B cell (primary cell): ENCODE measurements at regions of chr16 and their contacts with region 1.

Region 1: GRCh38 chr16:88452482-88453216 is 431 bp upstream of the ZFPM1 start:
- DNase-seq: peak; percentile 98
- ATAC-seq: peak; percentile 74
- H3K4me3 ChIP-seq: peak overlapping the region in 4 of 5 experiments; percentile 47 to 86 (median 60)
- H3K4me3 Mint-ChIP-seq: peak overlapping the region; percentile 84
- H3K27ac ChIP-seq: peak overlapping the region in 1 of 2 donors; percentile 67
- H3K27ac Mint-ChIP-seq: peak overlapping the region; percentile 88
- H3K4me1 ChIP-seq: peaks cover 51 to 61% of the 10 kb centered on the region in 2 donors
- H3K4me1 Mint-ChIP-seq: peaks cover 62% of the 10 kb centered on the region
- H3K27me3 ChIP-seq: peaks cover 0 to 11% (median 0%) of the 10 kb centered on the region in 4 experiments
- H3K27me3 Mint-ChIP-seq: no peaks in the 10 kb centered on the region
- CTCF ChIP-seq: no peak

Region 2: DNA sequence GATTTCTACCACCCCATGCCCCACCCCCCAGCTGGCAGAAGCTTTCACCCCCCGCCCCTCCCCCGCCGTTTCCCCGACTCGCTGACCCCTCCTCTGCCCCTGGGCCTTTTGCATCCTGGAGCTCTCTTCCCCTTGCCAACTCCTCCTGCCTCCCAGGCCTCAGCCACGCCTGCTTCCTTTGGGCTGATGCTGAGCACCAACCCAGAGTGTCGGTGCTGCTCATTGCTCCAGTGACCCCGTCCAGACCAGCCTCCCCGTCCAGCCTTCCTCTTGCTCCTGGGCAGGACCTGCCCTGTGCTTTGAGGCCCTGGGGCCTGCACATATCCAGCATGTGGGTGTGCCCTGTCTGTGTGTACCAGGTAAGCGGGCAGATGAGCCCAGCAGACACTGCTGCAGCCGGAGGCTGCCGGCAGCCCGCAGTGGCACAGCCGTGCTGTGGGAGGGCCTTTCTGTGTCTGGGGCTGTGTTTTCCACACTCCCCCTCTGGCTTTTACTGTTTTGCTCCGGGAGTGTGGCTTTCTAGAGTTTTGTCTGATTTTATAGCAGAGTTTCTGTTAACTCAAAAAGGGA is 777.4 kb before region 1 on chr16:
- CTCF ChIA-PET with region 1: no interaction called
- POLR2A ChIA-PET with region 1: no interaction called
- intact Hi-C with region 1: no loop called
- DNase-seq: no peak
- ATAC-seq: no peak
- H3K4me3 ChIP-seq: no peak overlapping the region
- H3K4me3 Mint-ChIP-seq: no peak overlapping the region
- H3K27ac ChIP-seq: no peak overlapping the region
- H3K27ac Mint-ChIP-seq: no peak overlapping the region
- H3K4me1 ChIP-seq: peaks cover 0 to 39% of the 10 kb centered on the region in 2 donors
- H3K4me1 Mint-ChIP-seq: peaks cover 2% of the 10 kb centered on the region
- H3K27me3 ChIP-seq: no peaks in the 10 kb centered on the region
- H3K27me3 Mint-ChIP-seq: peaks cover 3% of the 10 kb centered on the region
- CTCF ChIP-seq: no peak

Region 3: GRCh38 chr16:87950765-87951549 is 501.7 kb before region 1 on chr16 and contains the start of gene BANP:
- CTCF ChIA-PET with region 1: no interaction called
- POLR2A ChIA-PET with region 1: interaction called, 3 read pairs
- intact Hi-C with region 1: loop called (anchors 2 kb)
- DNase-seq: peak; percentile 99
- ATAC-seq: peak; percentile 91
- H3K4me3 ChIP-seq: peak within 1 kb of the TSS; percentile 75 to 99 (median 79)
- H3K4me3 Mint-ChIP-seq: peak within 1 kb of the TSS; percentile 97
- H3K27ac ChIP-seq: peak within 1 kb of the TSS; percentile 89 to 90
- H3K27ac Mint-ChIP-seq: peak within 1 kb of the TSS; percentile 99
- H3K4me1 ChIP-seq: peaks cover 46 to 65% of the 10 kb centered on the region in 2 donors
- H3K4me1 Mint-ChIP-seq: peaks cover 65% of the 10 kb centered on the region
- H3K27me3 ChIP-seq: no peaks in the 10 kb centered on the region
- H3K27me3 Mint-ChIP-seq: no peaks in the 10 kb centered on the region
- CTCF ChIP-seq: peak; percentile 70
- total RNA-seq, gene BANP: 181 and 212 TPM in 2 replicates

Region 4: DNA sequence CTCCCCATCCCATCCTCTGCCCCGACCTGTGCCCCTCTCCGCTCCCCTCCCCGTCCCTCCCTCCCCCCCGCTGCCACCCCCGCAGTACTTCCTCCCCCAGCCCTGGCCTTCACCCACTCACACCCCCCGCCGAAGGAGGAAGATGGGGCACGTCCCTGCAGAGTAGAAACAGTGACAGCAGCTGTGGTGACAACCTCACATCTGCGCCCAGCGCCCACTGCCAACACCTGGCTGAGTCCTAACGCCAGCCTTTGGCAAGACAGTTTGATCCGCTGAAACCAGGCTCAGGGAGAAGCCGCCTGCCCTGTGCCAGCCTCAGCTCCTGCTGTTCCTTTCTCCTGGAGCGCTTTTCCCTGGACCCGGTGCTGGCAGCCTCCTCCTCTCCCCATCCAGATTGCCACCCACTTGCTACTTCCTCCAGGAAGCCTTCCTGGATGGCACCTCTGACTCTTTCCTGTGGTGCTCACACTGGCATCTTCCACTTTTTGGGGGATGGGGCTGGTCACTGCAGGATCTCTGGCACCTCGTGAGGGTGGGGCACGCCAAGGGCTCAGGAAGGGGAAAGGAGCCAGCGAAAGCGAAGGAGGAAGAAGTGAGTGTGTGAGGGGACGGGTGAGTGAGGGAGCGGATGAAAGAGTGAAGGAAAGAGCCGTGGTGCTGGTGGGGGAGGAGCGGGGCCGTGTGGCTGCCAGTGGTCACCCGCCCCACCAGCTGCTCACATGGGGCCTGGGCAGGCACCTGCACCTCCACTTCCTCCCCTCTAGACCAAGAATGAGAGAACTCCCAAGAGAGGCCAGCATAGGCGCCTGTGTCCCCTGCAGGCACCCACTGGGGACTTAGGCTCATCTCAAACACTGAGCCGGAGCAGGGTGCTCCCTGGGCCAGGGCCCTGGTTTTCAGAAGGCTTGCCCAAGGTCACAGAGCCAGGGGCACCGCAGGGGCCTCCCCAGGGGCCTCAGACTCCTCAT is 27.4 kb after region 1 on chr16:
- CTCF ChIA-PET with region 1: interaction called, 4 read pairs
- POLR2A ChIA-PET with region 1: interaction called, 7 read pairs
- intact Hi-C with region 1: loop called (anchors 1 kb)
- DNase-seq: peak; percentile 85
- ATAC-seq: peak; percentile 81
- H3K4me3 ChIP-seq: peak overlapping the region in 4 of 5 experiments; percentile 17 to 53 (median 28)
- H3K4me3 Mint-ChIP-seq: peak overlapping the region; percentile 85
- H3K27ac ChIP-seq: peak overlapping the region; percentile 65 to 67
- H3K27ac Mint-ChIP-seq: peak overlapping the region; percentile 95
- H3K4me1 ChIP-seq: peaks cover 32 to 61% of the 10 kb centered on the region in 2 donors
- H3K4me1 Mint-ChIP-seq: peaks cover 49% of the 10 kb centered on the region
- H3K27me3 ChIP-seq: no peaks in the 10 kb centered on the region
- H3K27me3 Mint-ChIP-seq: no peaks in the 10 kb centered on the region
- CTCF ChIP-seq: no peak

Region 5: GRCh38 chr16:88569985-88570690 is 117.5 kb after region 1 on chr16 and contains the start of gene ZC3H18:
- CTCF ChIA-PET with region 1: no interaction called
- POLR2A ChIA-PET with region 1: no interaction called
- intact Hi-C with region 1: loop called (anchors 1 kb)
- DNase-seq: peak; percentile 99
- ATAC-seq: peak; percentile 93
- H3K4me3 ChIP-seq: peak within 1 kb of the TSS; percentile 55 to 76 (median 73)
- H3K4me3 Mint-ChIP-seq: peak within 1 kb of the TSS; percentile 90
- H3K27ac ChIP-seq: peak within 1 kb of the TSS; percentile 52 to 87
- H3K27ac Mint-ChIP-seq: peak within 1 kb of the TSS; percentile 91
- H3K4me1 ChIP-seq: peaks cover 17 to 18% of the 10 kb centered on the region in 2 donors
- H3K4me1 Mint-ChIP-seq: peaks cover 25% of the 10 kb centered on the region
- H3K27me3 ChIP-seq: no peaks in the 10 kb centered on the region
- H3K27me3 Mint-ChIP-seq: no peaks in the 10 kb centered on the region
- CTCF ChIP-seq: no peak
- total RNA-seq, gene ZC3H18: 74.2 and 84.1 TPM in 2 replicates

Region 6: DNA sequence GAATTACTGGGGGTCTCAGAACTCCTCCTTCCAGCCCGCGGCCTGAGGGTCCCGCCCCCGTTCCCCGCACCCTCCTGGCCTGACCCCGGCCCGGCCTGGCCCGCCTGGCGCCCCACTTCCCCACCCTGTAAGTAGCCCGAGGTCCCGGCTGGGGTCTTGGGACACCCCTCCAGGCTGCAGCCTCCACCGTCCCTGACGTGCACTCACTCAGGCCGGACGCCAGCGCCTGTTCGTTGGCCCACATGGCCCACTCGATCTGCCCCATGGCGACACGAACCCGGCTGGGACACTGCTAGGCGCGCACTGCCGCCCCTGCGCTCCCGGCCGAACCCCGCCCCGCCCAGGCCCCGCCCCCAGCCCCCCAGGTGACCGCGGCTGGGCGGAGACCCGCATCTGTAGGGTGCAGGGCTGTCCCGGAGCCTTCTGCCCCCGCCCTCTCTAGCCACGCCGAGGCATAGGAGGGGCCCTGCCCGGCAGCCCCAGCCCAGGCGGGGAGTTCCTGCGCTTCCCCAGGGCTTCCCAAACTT is 198.2 kb after region 1 on chr16 and contains the start of gene CYBA:
- CTCF ChIA-PET with region 1: no interaction called
- POLR2A ChIA-PET with region 1: no interaction called
- intact Hi-C with region 1: loop called (anchors 1 kb)
- DNase-seq: peak; percentile 92
- ATAC-seq: peak; percentile 77
- H3K4me3 ChIP-seq: peak within 1 kb of the TSS; percentile 73 to 98 (median 92)
- H3K4me3 Mint-ChIP-seq: peak within 1 kb of the TSS; percentile 96
- H3K27ac ChIP-seq: peak within 1 kb of the TSS; percentile 98 to 99
- H3K27ac Mint-ChIP-seq: peak within 1 kb of the TSS; percentile 98
- H3K4me1 ChIP-seq: peaks cover 46 to 65% of the 10 kb centered on the region in 2 donors
- H3K4me1 Mint-ChIP-seq: peaks cover 43% of the 10 kb centered on the region
- H3K27me3 ChIP-seq: no peaks in the 10 kb centered on the region
- H3K27me3 Mint-ChIP-seq: no peaks in the 10 kb centered on the region
- CTCF ChIP-seq: no peak
- total RNA-seq, gene CYBA: 698 and 701 TPM in 2 replicates